BJ (cell line): ENCODE measurements at regions of chr1 and their contacts with region 1.

Region 1: DNA sequence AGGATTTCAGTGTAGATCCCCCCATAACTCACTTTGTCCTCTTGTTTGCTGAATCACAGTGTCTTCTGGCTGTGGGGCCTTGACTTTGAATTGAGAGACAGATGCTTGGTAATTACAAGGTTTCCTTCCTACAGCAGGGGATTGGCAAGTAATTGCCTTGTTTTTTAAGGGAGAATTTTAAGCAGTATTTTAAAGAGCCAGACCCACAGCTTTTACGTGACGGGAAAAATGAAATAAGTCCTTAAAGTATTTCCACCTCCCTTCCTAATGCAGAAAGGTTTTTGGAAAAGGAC is 41.0 kb downstream of the PGBD5 start:
- DNase-seq: no peak
- H3K4me3 ChIP-seq: no peak overlapping the region
- H3K27me3 ChIP-seq: no peaks in the 10 kb centered on the region
- CTCF ChIP-seq: no peak

Region 2: GRCh38 chr1:230359992-230360668 is 25.0 kb before region 1 on chr1:
- CTCF ChIA-PET with region 1: no interaction called
- POLR2A ChIA-PET with region 1: interaction called, 14 read pairs
- DNase-seq: peak; percentile 58
- H3K4me3 ChIP-seq: no peak overlapping the region
- H3K27me3 ChIP-seq: no peaks in the 10 kb centered on the region
- CTCF ChIP-seq: no peak